Activated B cell treated with CpG ODN at 0.5 μM for 24 hours (primary cell): ENCODE measurements at regions of chr10 and their contacts with region 1.

Region 1: DNA sequence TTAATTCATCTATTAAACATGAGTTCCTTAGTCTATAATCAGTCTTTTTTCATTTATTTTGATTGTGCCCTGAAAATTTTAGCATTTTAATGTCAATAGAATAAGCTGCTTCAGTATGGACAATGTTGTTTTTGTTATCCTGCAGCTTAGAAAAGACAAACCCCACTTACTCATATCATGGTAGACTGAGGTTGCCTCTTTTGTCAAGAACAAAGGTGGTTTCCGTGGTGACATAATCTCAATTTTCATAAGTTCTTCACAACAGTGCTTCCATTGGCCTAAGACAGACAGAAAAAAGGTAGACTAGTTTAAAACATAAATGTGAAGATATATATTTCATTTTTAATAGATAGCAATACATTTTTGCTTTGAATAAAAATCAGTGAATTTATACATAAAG is 69.1 kb downstream of the RTKN2 start:
- DNase-seq: no peak
- ATAC-seq: no peak
- H3K4me3 Mint-ChIP-seq: no peak overlapping the region
- H3K27ac Mint-ChIP-seq: no peak overlapping the region
- H3K4me1 Mint-ChIP-seq: peaks cover 16% of the 10 kb centered on the region
- H3K27me3 Mint-ChIP-seq: no peaks in the 10 kb centered on the region
- CTCF ChIP-seq: no peak

Region 2: GRCh38 chr10:62183442-62183841 is 16.1 kb before region 1 on chr10:
- CTCF ChIA-PET with region 1: no interaction called
- POLR2A ChIA-PET with region 1: no interaction called
- intact Hi-C with region 1: no loop called
- DNase-seq: no peak
- ATAC-seq: no peak
- H3K4me3 Mint-ChIP-seq: no peak overlapping the region
- H3K27ac Mint-ChIP-seq: no peak overlapping the region
- H3K4me1 Mint-ChIP-seq: peaks cover 26% of the 10 kb centered on the region
- H3K27me3 Mint-ChIP-seq: no peaks in the 10 kb centered on the region
- CTCF ChIP-seq: no peak

Region 3: DNA sequence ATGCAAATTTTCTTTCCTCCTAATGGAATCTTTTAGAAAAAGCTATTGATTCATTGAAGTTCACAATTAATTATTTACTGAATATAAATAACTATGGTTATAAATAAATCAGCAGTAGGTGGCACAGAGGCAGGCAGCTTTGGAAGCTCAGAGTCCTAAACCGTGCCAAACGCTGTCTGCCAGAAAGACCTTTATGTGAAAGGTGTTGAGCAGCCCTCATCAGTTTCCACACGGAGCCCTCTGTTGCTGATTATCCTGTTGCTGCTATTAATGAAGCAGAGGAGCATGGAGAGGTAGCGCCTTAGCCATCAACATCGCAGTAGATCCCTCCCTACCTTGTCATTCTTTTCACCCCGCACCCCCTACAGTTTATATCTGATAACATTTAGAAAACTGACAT is 18.1 kb after region 1 on chr10:
- CTCF ChIA-PET with region 1: no interaction called
- POLR2A ChIA-PET with region 1: no interaction called
- intact Hi-C with region 1: loop called (anchors 1 kb)
- DNase-seq: no peak
- ATAC-seq: no peak
- H3K4me3 Mint-ChIP-seq: no peak overlapping the region
- H3K27ac Mint-ChIP-seq: no peak overlapping the region
- H3K4me1 Mint-ChIP-seq: no peaks in the 10 kb centered on the region
- H3K27me3 Mint-ChIP-seq: no peaks in the 10 kb centered on the region
- CTCF ChIP-seq: no peak